Astrocyte of the cerebellum (primary cell): ENCODE measurements at regions of chr1 and their contacts with region 1.

Region 1: DNA sequence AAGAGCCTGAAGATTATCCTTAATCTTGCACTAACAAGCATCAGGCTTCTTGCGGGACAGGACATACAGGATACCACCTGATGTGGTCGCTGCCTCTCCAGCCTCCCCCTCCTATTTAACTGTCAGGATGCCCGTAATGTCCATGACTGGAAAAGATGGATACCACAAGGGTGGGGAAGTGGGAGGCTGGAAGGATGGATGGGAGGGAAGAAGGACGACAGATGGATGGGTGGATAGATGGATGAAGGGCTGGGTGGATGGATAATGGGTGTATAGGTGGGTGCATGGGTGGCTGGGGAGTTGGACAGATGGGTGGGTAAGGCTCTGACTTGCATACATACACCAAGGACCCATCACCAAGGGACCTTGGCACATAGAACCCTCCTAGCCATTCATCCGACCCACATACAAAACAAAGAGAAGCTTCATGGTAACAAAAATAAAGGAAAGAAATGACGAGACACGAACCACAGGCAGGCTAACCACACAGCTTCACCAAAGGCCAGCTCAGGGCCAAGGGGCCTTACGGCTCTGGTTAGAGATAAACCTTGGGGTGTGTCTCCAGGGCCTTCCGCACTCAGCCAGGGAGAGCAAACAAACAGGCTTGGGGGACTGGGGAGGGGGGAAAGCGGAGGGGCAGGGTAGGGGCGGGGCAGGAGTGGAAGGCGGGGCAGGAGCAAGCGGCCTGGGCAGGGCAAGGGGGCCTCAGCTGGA is 50.5 kb downstream of the HSPG2 start:
- DNase-seq: no peak
- H3K4me3 ChIP-seq: no peak overlapping the region
- CTCF ChIP-seq: no peak

Region 2: DNA sequence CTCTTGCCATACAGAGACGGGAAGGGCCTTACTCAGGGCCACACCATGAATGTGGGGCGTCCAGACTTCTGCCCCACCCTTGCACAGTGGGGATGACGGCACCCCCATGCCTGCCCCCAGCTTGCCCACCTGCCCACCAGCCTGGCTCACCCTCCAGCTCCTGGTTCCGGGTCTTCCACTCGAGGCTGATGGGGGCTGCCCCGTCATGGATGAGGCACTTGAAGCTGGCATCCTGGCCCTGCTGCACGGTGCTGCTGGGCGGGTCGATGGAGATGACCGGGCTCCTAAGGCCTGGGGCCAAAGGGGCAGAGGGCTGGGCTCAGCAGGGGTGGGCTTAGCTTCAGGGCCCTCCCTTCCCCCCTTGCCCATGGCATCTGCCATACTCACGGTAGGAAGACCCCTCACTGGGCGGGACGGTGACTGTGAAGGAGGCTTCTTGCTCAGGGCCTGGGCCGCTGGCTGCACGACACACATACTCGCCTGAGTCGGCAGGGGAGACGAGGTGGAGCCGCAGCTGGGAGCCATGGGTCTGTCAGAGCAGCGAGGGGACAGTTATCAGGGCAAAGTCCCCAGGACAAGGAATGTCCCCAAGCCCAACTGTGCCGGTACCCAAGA is 44.7 kb before region 1 on chr1:
- in situ Hi-C with region 1: loop called (anchors 5 kb)
- DNase-seq: no peak
- H3K4me3 ChIP-seq: no peak overlapping the region
- CTCF ChIP-seq: no peak

Region 3: DNA sequence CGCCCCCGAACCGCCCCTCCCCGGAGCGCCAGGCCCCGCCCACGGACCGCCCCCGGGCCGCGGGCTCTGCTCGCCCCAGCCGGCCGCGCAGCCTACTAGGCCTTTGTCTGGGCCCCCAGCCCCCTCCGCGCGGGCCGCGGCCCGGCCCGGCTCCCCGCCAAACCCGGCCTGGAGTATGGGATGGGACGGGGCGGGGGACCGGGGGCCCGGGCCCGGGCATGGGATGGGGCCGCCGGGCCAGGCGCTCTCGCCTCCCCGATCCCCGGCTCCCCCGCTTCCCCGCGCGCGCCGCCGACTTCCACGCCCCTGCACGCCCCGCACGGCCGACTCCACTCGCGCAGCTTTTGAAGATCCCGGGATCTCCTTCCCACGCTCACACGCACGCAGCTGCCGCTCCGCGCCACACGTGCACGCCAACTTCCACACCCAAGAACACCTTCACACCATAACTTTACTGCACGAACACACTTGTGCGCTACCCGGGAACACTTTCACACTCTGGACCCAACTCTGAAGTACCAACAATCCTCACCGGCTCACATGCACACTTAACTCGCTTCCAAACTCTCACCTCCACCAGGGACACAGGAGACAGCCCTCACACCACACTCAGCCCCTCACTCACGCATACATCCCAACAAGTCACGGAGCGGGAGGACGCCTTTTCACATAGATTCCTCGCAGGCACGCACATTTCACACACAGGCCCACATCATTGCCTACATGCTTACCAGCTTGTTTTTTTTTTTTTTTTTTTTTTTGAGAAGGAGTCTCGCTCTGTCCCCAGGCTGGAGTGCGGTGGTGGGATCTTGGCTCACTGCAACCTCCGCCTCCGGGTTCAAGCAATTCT is 51.0 kb after region 1 on chr1:
- in situ Hi-C with region 1: loop called (anchors 5 kb)
- DNase-seq: peak; percentile 39
- H3K4me3 ChIP-seq: peak overlapping the region; percentile 19
- CTCF ChIP-seq: no peak

Region 4: GRCh38 chr1:22052115-22053016 is 165.7 kb after region 1 on chr1 and contains the start of gene CDC42:
- in situ Hi-C with region 1: no loop called
- DNase-seq: peak; percentile 90
- H3K4me3 ChIP-seq: peak within 1 kb of the TSS; percentile 82
- CTCF ChIP-seq: no peak